ENCODE measurements at regions of chr1 and their contacts with region 1.

Region 1: DNA sequence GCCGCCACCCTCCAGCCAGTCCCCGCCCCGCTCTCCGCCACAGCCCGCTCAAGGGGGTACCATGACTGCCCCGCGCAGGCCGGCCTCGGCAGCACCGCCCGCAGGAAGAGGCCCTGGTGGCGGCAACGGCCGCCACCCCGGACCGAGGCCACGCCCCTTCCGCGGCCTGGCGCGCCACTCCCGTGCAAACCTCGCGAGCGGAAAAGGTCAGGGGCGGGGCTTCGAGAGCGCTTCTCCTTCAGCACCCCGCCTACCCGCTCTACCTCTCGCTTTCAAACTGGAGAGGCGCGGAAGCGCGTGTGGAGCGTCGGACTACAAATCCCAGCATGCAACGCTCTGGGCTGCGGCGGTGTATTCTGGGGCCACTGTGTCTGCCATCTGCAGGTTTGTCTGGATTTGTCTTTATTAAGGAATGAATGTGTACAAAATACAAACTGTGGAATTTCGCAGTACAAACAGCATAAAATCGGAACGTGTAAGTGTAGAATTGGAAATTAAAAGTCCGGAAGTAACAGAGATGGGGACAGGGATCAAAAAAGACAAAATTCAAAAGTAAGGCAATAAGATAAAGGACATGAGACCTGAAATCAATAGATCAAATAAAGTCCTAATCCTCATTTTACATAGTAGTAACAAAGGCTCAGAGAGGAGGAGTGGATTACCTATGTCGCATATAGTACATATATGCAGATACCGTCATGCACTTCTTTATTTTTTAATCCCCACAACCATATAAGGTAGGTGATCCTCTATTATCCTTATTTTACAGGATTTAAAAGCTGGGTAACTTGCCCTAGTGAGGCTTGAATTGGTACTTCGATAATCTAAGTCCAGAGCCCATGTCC is 464 bp upstream of the ADSS2 start:
- DNase-seq: peak; percentile 99
- H3K4me3 Mint-ChIP-seq: peak overlapping the region; percentile 96
- H3K27ac Mint-ChIP-seq: peak overlapping the region; percentile 97
- H3K4me1 Mint-ChIP-seq: peaks cover 45% of the 10 kb centered on the region
- H3K27me3 Mint-ChIP-seq: no peaks in the 10 kb centered on the region

Region 2: GRCh38 chr1:243255791-243256512 is 1196.2 kb before region 1 on chr1 and contains the start of gene SDCCAG8:
- CTCF ChIA-PET with region 1: no interaction called
- POLR2A ChIA-PET with region 1: no interaction called
- intact Hi-C with region 1: loop called (anchors 2 kb)
- DNase-seq: peak; percentile 97
- H3K4me3 Mint-ChIP-seq: peak within 1 kb of the TSS; percentile 95
- H3K27ac Mint-ChIP-seq: peak within 1 kb of the TSS; percentile 100
- H3K4me1 Mint-ChIP-seq: peaks cover 40% of the 10 kb centered on the region
- H3K27me3 Mint-ChIP-seq: peaks cover 3% of the 10 kb centered on the region
- total RNA-seq, gene SDCCAG8: 20.7 to 23.2 TPM

Region 3: DNA sequence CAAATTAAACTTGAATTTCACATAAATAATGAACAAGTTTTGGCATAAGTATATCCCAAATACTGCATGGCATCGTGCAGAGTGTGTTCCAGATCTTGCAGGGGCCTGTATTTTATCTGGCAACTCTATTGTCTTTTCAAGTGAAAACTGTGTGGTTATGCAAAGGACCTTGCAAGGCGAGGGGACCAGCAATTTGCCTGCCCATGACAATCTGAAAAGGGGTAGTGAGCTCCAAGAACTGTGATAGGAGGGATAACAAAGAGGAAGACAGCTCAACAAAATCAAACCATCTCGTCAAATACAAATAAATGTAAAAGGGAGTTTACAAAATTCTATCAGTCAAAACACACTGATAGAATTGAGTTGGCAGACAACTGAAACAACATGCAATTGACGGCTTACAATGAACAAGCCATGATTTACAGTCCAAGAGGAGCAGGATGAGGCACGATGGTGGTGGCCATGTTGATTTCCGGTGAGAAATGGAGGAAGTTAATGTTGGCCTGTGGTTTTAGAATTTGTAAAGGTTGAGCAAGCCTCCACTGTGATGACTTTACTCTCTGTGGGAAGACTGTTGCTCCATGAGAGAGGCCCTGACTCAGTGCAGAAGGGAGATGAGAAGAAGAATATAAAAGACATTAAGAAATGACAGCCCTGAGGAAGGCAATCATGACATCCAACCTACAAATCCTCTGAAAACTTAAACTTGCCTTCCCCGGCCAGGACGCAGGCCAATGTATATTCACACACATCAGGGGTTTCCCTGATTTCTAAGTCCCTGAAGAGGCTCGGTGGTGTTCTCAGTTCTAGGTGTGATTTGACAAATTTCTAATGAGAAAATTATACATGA is 132.7 kb before region 1 on chr1:
- CTCF ChIA-PET with region 1: no interaction called
- POLR2A ChIA-PET with region 1: no interaction called
- intact Hi-C with region 1: loop called (anchors 1 kb)
- DNase-seq: peak; percentile 78
- H3K4me3 Mint-ChIP-seq: no peak overlapping the region
- H3K27ac Mint-ChIP-seq: peak overlapping the region; percentile 64
- H3K4me1 Mint-ChIP-seq: peaks cover 29% of the 10 kb centered on the region
- H3K27me3 Mint-ChIP-seq: no peaks in the 10 kb centered on the region

Region 4: GRCh38 chr1:244599937-244600350 is 147.8 kb after region 1 on chr1:
- CTCF ChIA-PET with region 1: interaction called, 3 read pairs
- POLR2A ChIA-PET with region 1: no interaction called
- intact Hi-C with region 1: loop called (anchors 2 kb)
- DNase-seq: peak; percentile 76
- H3K4me3 Mint-ChIP-seq: peak overlapping the region; percentile 70
- H3K27ac Mint-ChIP-seq: peak overlapping the region; percentile 88
- H3K4me1 Mint-ChIP-seq: peaks cover 24% of the 10 kb centered on the region
- H3K27me3 Mint-ChIP-seq: peaks cover 4% of the 10 kb centered on the region

Region 5: DNA sequence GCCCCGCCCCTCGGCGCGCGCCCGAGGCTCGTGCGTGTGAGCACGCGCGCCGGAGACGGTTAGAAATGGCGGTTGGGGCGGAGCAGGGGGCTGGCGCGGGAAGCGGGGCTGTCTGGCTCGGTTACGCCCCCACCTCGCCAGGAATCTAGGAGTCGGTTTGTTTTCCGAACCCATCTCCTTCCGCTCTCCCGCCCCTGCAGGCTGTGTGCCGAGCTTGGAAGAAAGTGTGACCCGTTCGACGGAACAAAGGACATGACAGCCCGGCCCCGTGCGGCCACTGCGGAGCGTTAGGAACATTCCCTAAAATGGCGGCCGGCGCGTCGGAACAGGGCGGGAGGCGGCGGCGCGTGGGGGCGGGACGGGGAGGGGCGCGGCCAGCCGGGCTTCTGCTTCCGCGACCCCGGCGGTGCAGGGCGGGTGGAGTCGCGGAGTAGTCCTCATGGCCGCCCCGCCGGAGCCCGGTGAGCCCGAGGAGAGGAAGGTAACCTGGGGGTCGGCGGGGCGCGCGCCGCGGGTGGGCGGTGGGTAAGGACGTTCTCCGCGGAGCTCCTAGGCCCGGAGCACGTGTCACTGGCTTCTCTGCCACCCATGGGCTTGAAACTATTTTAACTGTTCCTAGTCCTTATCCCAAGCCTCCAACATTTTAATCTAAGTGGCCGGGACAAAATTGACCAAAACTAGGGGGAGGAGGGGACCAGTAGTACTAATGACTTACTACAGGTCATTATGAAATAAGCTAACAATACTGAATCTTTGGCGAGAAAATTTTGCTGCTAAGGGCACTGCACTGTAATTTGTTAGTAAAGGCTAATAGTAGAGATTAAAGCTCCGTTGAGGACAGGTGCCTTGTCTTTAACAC is 383.3 kb after region 1 on chr1 and contains the start of gene COX20:
- CTCF ChIA-PET with region 1: no interaction called
- POLR2A ChIA-PET with region 1: no interaction called
- intact Hi-C with region 1: loop called (anchors 1 kb)
- DNase-seq: peak; percentile 89
- H3K4me3 Mint-ChIP-seq: peak within 1 kb of the TSS; percentile 94
- H3K27ac Mint-ChIP-seq: peak within 1 kb of the TSS; percentile 99
- H3K4me1 Mint-ChIP-seq: peaks cover 45% of the 10 kb centered on the region
- H3K27me3 Mint-ChIP-seq: no peaks in the 10 kb centered on the region
- total RNA-seq, gene COX20: 23.4 to 27.8 TPM

Region 6: DNA sequence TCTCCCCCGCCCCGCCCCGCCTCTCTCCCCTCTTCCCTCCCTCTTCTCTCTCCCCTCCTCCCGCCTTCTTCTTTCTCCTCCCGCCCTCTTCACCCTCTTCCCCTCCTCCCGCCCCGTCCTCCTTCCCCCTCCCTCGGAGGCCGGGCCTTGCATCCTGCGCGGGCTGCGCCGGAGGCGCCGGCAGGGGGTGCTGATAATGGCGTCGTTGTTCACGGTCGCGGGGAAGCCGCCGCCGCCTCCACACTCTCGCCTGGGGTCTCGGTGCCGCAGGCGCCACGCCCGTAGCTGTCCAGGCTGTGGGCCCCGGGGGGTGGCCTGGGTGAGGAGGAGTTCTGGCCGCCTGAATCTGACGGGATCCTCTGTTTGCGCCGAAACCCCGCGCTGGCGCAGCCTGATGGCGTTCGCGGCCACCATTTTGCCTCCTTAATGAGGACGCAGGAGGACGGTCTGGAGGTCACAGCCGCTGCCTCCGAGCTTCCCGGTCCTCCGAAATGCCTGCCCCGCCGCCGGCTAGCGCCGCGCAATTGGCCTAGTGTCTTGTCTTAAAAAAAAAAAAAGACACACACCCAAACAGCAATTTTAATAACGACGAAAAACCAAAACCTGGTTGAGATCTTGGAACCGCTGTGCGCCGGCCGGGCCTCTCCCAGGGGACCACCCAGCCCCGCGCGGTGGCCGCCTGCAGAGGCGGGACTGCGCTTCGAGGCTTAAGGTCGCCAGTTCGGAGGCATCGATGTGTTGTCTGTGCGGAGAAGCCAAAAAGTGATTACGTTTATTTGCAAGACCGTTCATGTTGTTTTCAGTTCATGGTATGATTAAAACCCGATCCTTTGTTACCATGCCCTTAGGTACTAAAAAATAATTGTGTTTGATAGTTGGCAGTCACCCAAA is 518.7 kb after region 1 on chr1:
- CTCF ChIA-PET with region 1: no interaction called
- POLR2A ChIA-PET with region 1: no interaction called
- intact Hi-C with region 1: loop called (anchors 2 kb)
- DNase-seq: peak; percentile 93
- H3K4me3 Mint-ChIP-seq: peak overlapping the region; percentile 89
- H3K27ac Mint-ChIP-seq: peak overlapping the region; percentile 98
- H3K4me1 Mint-ChIP-seq: peaks cover 18% of the 10 kb centered on the region
- H3K27me3 Mint-ChIP-seq: no peaks in the 10 kb centered on the region